Caco-2 (cell line): ENCODE measurements at regions of chr1 and their contacts with region 1.

Region 1: GRCh38 chr1:7070389-7071029 is 285.3 kb downstream of the CAMTA1 start:
- DNase-seq: peak; percentile 56 to 58
- H3K4me3 ChIP-seq: no peak overlapping the region
- H3K4me3 Mint-ChIP-seq: no peak overlapping the region
- H3K27ac Mint-ChIP-seq: no peak overlapping the region
- H3K4me1 ChIP-seq: no peaks in the 10 kb centered on the region
- H3K4me1 Mint-ChIP-seq: no peaks in the 10 kb centered on the region
- H3K27me3 ChIP-seq: no peaks in the 10 kb centered on the region
- H3K27me3 Mint-ChIP-seq: peaks cover 10% of the 10 kb centered on the region
- CTCF ChIP-seq: peak; percentile 64 to 83

Region 2: GRCh38 chr1:6794164-6794563 is 276.3 kb before region 1 on chr1:
- CTCF ChIA-PET with region 1: interaction called, 3 read pairs
- POLR2A ChIA-PET with region 1: no interaction called
- intact Hi-C with region 1: loop called (anchors 10 kb)
- DNase-seq: peak in 1 of 2 experiments; percentile 44
- H3K4me3 ChIP-seq: no peak overlapping the region
- H3K4me3 Mint-ChIP-seq: no peak overlapping the region
- H3K27ac Mint-ChIP-seq: no peak overlapping the region
- H3K4me1 ChIP-seq: peaks cover 5% of the 10 kb centered on the region; the same call in 1 of the 2 replicates
- H3K4me1 Mint-ChIP-seq: peaks cover 9% of the 10 kb centered on the region
- H3K27me3 ChIP-seq: no peaks in the 10 kb centered on the region
- H3K27me3 Mint-ChIP-seq: no peaks in the 10 kb centered on the region
- CTCF ChIP-seq: peak in 1 of 2 experiments; percentile 11

Region 3: DNA sequence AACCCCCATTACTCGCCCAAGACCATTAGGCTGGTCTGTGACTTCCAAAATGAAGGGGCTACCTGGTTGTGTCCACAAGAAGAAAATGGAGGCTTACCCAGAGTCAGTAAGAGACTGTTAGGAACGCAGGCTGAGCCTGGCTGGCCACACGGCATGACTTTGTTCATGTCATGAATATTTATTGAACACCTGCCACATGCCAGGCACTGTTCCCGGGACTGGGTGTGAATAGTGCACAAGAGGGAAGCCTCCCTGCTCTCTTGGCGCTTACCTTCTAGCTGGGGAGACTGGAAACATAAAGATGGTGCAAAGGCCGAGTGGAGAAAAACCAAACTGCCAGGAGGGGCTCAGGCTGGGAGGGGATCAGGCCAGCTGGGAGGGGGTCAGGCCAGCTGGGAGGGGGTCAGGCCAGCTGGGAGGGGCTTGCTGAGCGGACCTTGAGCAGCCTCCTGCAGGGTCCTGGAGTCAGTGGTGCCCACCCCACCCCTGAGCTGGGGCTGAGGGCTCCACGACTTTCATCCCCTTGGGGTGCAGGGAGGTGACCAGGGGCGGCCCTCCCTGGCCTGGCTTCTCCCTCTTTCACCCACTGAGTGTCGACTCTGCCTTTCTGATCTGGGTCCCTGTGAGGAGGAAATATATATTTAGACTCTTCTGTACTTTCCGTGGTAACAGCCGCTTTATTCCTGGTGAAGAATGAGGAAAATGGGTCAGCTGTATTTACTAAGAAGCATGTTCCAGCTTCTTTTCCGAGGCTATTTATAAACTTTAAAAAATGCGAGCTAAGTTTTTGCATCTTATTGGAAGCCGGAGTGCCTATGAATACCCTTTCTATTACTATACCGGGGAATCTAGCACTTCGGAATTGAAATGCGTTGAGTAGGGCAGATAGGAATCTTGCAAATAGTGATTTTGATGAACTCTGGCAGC is 146.3 kb before region 1 on chr1:
- CTCF ChIA-PET with region 1: no interaction called
- POLR2A ChIA-PET with region 1: no interaction called
- intact Hi-C with region 1: no loop called
- DNase-seq: no peak
- H3K4me3 ChIP-seq: no peak overlapping the region
- H3K4me3 Mint-ChIP-seq: no peak overlapping the region
- H3K27ac Mint-ChIP-seq: no peak overlapping the region
- H3K4me1 ChIP-seq: no peaks in the 10 kb centered on the region
- H3K4me1 Mint-ChIP-seq: no peaks in the 10 kb centered on the region
- H3K27me3 ChIP-seq: no peaks in the 10 kb centered on the region
- H3K27me3 Mint-ChIP-seq: peaks cover 8% of the 10 kb centered on the region
- CTCF ChIP-seq: no peak

Region 4: GRCh38 chr1:6969106-6969505 is 101.4 kb before region 1 on chr1:
- CTCF ChIA-PET with region 1: no interaction called
- POLR2A ChIA-PET with region 1: no interaction called
- intact Hi-C with region 1: no loop called
- DNase-seq: no peak
- H3K4me3 ChIP-seq: no peak overlapping the region
- H3K4me3 Mint-ChIP-seq: no peak overlapping the region
- H3K27ac Mint-ChIP-seq: no peak overlapping the region
- H3K4me1 ChIP-seq: no peaks in the 10 kb centered on the region
- H3K4me1 Mint-ChIP-seq: no peaks in the 10 kb centered on the region
- H3K27me3 ChIP-seq: no peaks in the 10 kb centered on the region
- H3K27me3 Mint-ChIP-seq: peaks cover 26% of the 10 kb centered on the region
- CTCF ChIP-seq: no peak